ENCODE measurements at regions of chr12 and their contacts with region 1.

Region 1: DNA sequence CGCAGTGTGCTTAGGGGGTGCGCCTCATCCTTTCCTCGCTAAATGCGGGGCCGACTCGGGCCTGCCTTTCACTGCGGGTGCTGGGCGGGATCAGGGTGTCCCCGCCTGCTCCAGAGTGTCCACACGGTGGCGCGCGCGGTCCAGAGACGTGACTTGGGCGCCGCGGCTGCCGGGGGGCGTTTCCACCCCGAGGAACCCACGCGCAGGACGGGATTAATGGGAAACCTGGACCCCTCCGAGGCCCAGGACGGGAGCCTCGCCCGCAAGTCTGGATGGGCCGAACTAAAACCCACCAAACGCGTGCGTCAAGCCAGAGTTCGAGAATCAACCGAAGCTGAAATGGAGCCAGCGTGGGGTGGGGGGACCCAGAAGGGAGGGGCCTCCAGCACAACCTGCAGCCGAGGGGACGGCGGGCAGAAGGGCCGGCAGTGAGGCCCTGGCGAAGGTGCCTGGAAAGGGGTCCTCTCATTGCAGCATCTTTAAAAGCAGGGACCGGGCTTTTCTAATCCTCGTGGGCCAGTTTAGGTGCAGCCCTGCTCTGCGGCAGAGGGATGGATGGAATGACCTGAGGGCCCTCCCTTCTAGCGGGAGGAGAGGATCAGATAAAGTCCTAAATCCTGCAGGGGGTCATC is 93.3 kb downstream of the NINJ2 start:
- DNase-seq: peak; percentile 86
- H3K4me3 Mint-ChIP-seq: peak overlapping the region; percentile 85
- H3K27ac Mint-ChIP-seq: peak overlapping the region; percentile 90
- H3K4me1 Mint-ChIP-seq: peaks cover 23% of the 10 kb centered on the region
- H3K27me3 Mint-ChIP-seq: no peaks in the 10 kb centered on the region
- CTCF ChIP-seq: peak; percentile 90

Region 2: DNA sequence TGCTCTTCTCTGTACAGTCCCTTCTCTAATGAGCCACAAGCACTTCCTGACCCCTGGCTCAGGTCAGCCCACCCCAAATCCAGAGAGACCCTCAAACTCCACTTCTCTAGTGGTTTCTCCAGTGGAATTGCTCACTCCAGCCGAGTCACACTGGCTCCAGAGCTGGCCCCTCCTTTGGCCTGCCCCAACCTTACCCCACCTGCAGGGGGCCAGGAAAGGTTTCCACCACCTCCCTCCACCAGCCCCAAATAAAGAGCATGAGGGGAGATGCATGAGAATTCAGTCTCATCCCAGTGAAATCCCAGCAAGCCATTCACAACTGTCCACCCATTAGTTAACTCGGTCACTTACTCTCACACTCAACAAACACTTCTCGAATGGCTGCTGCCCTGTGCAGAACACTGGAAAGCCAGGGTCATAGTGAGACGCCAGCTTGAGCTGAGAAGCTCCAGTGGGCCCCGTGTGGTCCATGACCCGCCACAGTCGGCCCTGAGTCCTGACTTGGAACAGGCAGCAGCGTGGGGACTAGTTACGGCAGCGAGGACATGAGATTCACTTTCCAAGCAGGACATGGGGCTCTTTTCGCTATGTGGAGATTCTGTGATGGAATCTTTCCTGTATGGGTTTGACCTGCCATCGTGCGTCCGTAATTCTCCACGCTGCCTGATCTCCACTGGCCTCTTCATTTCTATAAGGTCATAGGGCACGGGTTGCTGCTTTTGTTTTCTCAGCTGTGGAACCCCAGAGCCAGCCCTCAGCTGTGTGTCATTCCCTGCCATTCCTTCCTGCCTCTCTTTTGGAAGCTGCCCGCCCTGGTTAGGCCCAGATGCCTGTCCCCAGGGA is 400.2 kb before region 1 on chr12:
- CTCF ChIA-PET with region 1: no interaction called
- POLR2A ChIA-PET with region 1: no interaction called
- intact Hi-C with region 1: no loop called
- DNase-seq: no peak
- H3K4me3 Mint-ChIP-seq: no peak overlapping the region
- H3K27ac Mint-ChIP-seq: no peak overlapping the region
- H3K4me1 Mint-ChIP-seq: no peaks in the 10 kb centered on the region
- H3K27me3 Mint-ChIP-seq: peaks cover 27% of the 10 kb centered on the region
- CTCF ChIP-seq: peak; percentile 10

Region 3: GRCh38 chr12:269191-269590 is 300.7 kb before region 1 on chr12:
- CTCF ChIA-PET with region 1: no interaction called
- POLR2A ChIA-PET with region 1: no interaction called
- intact Hi-C with region 1: no loop called
- DNase-seq: peak; percentile 9
- H3K4me3 Mint-ChIP-seq: no peak overlapping the region
- H3K27ac Mint-ChIP-seq: no peak overlapping the region
- H3K4me1 Mint-ChIP-seq: no peaks in the 10 kb centered on the region
- H3K27me3 Mint-ChIP-seq: peaks cover 17% of the 10 kb centered on the region
- CTCF ChIP-seq: no peak

Region 4: GRCh38 chr12:597926-598568 is 28.1 kb after region 1 on chr12:
- CTCF ChIA-PET with region 1: interaction called, 23 read pairs
- POLR2A ChIA-PET with region 1: interaction called, 24 read pairs
- intact Hi-C with region 1: no loop called
- DNase-seq: peak; percentile 92
- H3K4me3 Mint-ChIP-seq: peak overlapping the region; percentile 15
- H3K27ac Mint-ChIP-seq: peak overlapping the region; percentile 18
- H3K4me1 Mint-ChIP-seq: peaks cover 20% of the 10 kb centered on the region
- H3K27me3 Mint-ChIP-seq: no peaks in the 10 kb centered on the region
- CTCF ChIP-seq: no peak

Region 5: DNA sequence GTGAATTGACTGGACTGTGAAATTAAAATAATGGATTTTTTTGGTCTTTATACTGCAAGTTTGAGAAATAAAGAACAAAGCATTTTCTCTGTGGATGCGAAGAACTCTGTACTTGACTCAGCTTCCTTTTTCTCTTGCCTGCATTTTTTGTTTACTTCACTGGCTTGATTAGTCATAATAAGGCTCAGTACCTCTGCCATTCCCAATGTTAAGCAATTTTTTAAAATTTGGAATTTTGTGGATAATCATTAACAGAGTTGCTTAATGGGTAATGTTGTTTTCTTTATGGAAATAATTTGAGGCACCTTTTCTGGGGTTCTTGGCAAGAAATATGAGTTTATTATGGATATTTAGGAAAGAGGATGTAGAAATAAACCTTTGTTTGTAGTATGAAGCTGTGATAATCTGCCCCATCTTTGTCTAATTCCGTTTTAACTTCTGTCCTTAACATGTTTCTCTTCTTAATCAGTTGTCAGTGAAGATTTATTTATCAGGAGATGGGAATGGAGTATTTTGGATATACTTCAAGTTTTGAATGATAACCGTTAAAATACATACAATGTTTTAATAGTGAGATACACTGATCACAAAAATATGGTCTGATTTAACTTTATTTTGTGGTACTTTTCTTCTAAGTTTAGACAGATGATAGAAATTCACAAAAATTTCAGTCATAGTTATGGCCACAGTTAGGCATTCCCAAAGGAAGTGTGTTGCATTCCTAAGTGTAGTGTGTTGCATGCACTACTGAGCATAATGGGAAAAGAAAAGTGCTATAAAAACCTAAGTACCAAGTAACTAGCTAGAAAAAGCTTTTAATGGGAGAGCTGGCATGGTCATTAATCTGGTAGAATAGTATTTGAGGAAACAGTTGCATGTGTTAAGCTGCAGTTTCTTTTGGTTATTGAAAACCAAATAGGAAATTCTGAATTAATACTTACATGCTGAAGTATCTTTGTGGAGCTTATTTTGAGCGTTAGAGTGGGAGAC is 210.1 kb after region 1 on chr12:
- CTCF ChIA-PET with region 1: interaction called, 5 read pairs
- POLR2A ChIA-PET with region 1: interaction called, 12 read pairs
- intact Hi-C with region 1: no loop called
- DNase-seq: peak; percentile 56
- H3K4me3 Mint-ChIP-seq: peak overlapping the region; percentile 62
- H3K27ac Mint-ChIP-seq: peak overlapping the region; percentile 63
- H3K4me1 Mint-ChIP-seq: peaks cover 19% of the 10 kb centered on the region
- H3K27me3 Mint-ChIP-seq: no peaks in the 10 kb centered on the region
- CTCF ChIP-seq: no peak

Region 6: DNA sequence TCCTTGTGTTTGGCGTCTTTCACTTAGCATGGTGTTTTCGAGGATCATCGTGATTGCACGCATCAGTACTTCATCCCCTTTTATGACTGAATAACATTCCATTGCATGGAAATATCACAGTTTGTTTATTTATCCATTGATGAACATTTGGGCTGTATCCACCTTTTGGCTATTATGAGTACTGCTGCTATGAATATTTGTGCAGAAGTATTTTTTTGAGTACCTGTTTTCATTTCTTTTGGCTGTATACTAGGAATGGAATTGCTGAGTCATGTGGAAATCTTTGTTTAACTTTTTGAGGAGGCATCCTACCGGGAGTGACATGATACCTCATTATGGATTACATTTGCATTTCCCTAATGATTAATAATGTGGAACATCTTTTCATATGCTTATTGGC is 248.8 kb after region 1 on chr12:
- CTCF ChIA-PET with region 1: interaction called, 74 read pairs
- POLR2A ChIA-PET with region 1: interaction called, 53 read pairs
- intact Hi-C with region 1: loop called (anchors 1 kb)
- DNase-seq: peak; percentile 16
- H3K4me3 Mint-ChIP-seq: no peak overlapping the region
- H3K27ac Mint-ChIP-seq: peak overlapping the region; percentile 83
- H3K4me1 Mint-ChIP-seq: peaks cover 28% of the 10 kb centered on the region
- H3K27me3 Mint-ChIP-seq: no peaks in the 10 kb centered on the region
- CTCF ChIP-seq: no peak

Region 7: GRCh38 chr12:857611-858010 is 287.7 kb after region 1 on chr12:
- CTCF ChIA-PET with region 1: interaction called, 5 read pairs
- POLR2A ChIA-PET with region 1: interaction called, 21 read pairs
- intact Hi-C with region 1: no loop called
- DNase-seq: peak; percentile 88
- H3K4me3 Mint-ChIP-seq: peak overlapping the region; percentile 47
- H3K27ac Mint-ChIP-seq: peak overlapping the region; percentile 92
- H3K4me1 Mint-ChIP-seq: peaks cover 24% of the 10 kb centered on the region
- H3K27me3 Mint-ChIP-seq: no peaks in the 10 kb centered on the region
- CTCF ChIP-seq: no peak

Region 8: GRCh38 chr12:949453-950191 is 379.7 kb after region 1 on chr12 and contains the start of gene RAD52:
- CTCF ChIA-PET with region 1: interaction called, 9 read pairs
- POLR2A ChIA-PET with region 1: interaction called, 33 read pairs
- intact Hi-C with region 1: loop called (anchors 1 kb)
- DNase-seq: peak; percentile 98
- H3K4me3 Mint-ChIP-seq: peak within 1 kb of the TSS; percentile 96
- H3K27ac Mint-ChIP-seq: peak within 1 kb of the TSS; percentile 86
- H3K4me1 Mint-ChIP-seq: peaks cover 26% of the 10 kb centered on the region
- H3K27me3 Mint-ChIP-seq: no peaks in the 10 kb centered on the region
- CTCF ChIP-seq: peak; percentile 92
- total RNA-seq, gene RAD52: 26.0 and 27.9 TPM in 2 replicates

Region 9: GRCh38 chr12:1117970-1118563 is 548.1 kb after region 1 on chr12:
- CTCF ChIA-PET with region 1: interaction called, 4 read pairs
- POLR2A ChIA-PET with region 1: interaction called, 10 read pairs
- intact Hi-C with region 1: loop called (anchors 10 kb)
- DNase-seq: peak; percentile 77
- H3K4me3 Mint-ChIP-seq: no peak overlapping the region
- H3K27ac Mint-ChIP-seq: no peak overlapping the region
- H3K4me1 Mint-ChIP-seq: peaks cover 12% of the 10 kb centered on the region
- H3K27me3 Mint-ChIP-seq: no peaks in the 10 kb centered on the region
- CTCF ChIP-seq: peak; percentile 86